ENCODE measurements at regions of chr16 and their contacts with region 1.

Region 1: GRCh38 chr16:30984669-30985400 is at the start of gene HSD3B7:
- DNase-seq: peak; percentile 73 to 88 (median 79)
- H3K4me3 ChIP-seq: peak within 1 kb of the TSS in 57 of 59 donors; percentile 8 to 65 (median 45)
- H3K27ac ChIP-seq: peak within 1 kb of the TSS in 23 of 59 donors; percentile 14 to 74 (median 48)
- H3K27me3 ChIP-seq: no peaks in the 10 kb centered on the region
- CTCF ChIP-seq: peak; percentile 67 to 99 (median 94)
- total RNA-seq, gene HSD3B7: 2.0 to 15.0 (median 4.4) TPM

Region 2: GRCh38 chr16:30609926-30610839 is 374.7 kb before region 1 on chr16 and contains the start of gene ZNF689:
- intact Hi-C with region 1: no loop called
- DNase-seq: peak; percentile 93 to 98 (median 96)
- H3K4me3 ChIP-seq: peak within 1 kb of the TSS; percentile 65 to 100 (median 93)
- H3K27ac ChIP-seq: peak within 1 kb of the TSS; percentile 27 to 99 (median 96)
- H3K27me3 ChIP-seq: no peaks in the 10 kb centered on the region
- CTCF ChIP-seq: peak in 25 of 56 donors; percentile 4 to 49 (median 27)
- total RNA-seq, gene ZNF689: 5.9 to 15.6 (median 8.8) TPM

Region 3: GRCh38 chr16:30934827-30935557 is 49.8 kb before region 1 on chr16:
- intact Hi-C with region 1: no loop called
- DNase-seq: peak in 6 of 10 donors; percentile 17 to 77 (median 56)
- H3K4me3 ChIP-seq: no peak overlapping the region
- H3K27ac ChIP-seq: peak overlapping the region in 14 of 59 donors; percentile 9 to 62 (median 28)
- H3K27me3 ChIP-seq: no peaks in the 10 kb centered on the region
- CTCF ChIP-seq: peak in 52 of 56 donors; percentile 11 to 71 (median 51)

Region 4: GRCh38 chr16:31032736-31033708 is 48.2 kb after region 1 on chr16 and contains the start of gene STX4:
- intact Hi-C with region 1: loop called in 1 of 2 experiments (anchors 5 kb)
- DNase-seq: peak; percentile 96 to 99 (median 98)
- H3K4me3 ChIP-seq: peak within 1 kb of the TSS; percentile 55 to 100 (median 96)
- H3K27ac ChIP-seq: peak within 1 kb of the TSS; percentile 85 to 100 (median 99)
- H3K27me3 ChIP-seq: no peaks in the 10 kb centered on the region
- CTCF ChIP-seq: peak in 20 of 56 donors; percentile 8 to 47 (median 20)
- total RNA-seq, gene STX4: 37.7 to 113 (median 67.3) TPM

Region 5: DNA sequence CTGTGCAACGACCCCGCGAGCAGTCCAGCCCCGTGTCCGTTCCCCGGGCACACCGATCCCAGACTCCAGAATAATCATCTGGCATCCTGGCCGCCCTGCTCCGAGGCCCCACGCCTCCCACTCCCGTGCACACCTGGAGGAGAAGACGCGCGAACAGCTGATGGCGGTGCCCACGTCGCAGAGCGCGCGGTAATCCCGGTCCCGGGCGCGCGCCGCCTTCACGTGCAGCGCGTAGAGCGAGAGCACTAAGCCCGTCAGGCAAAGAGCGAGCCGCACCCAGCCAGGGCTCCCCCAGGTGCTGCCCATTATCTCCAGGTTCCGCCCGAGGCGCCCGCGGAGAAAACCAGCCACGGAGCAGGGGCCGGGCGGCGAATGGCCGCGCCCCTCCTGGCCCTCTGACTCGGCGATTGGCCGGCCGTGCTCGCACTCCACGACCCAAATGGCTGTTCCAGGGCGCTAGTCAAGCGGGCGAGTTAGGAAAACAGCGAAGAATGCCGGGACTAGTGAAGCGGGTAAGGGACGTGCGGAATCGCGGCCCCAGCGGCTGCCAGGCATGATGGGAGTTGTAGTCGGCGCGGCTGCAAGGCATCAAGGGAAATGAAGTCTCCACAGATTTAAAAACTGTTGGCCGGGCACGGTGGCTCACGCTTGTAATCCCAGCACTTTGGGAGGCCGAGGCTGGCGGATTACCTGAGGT is 109.7 kb after region 1 on chr16 and contains the start of gene VKORC1:
- intact Hi-C with region 1: loop called in 1 of 2 experiments (anchors 2 kb)
- DNase-seq: peak; percentile 88 to 97 (median 94)
- H3K4me3 ChIP-seq: peak within 1 kb of the TSS; percentile 61 to 99 (median 90)
- H3K27ac ChIP-seq: peak within 1 kb of the TSS; percentile 45 to 96 (median 87)
- H3K27me3 ChIP-seq: no peaks in the 10 kb centered on the region
- CTCF ChIP-seq: peak in 37 of 56 donors; percentile 11 to 59 (median 33)
- total RNA-seq, gene VKORC1: 23.4 to 53.8 (median 37.0) TPM

Region 6: GRCh38 chr16:31142109-31143010 is 157.5 kb after region 1 on chr16:
- intact Hi-C with region 1: loop called in 1 of 2 experiments (anchors 5 kb)
- DNase-seq: peak; percentile 89 to 98 (median 95)
- H3K4me3 ChIP-seq: peak overlapping the region; percentile 25 to 78 (median 64)
- H3K27ac ChIP-seq: peak overlapping the region in 58 of 59 donors; percentile 30 to 93 (median 82)
- H3K27me3 ChIP-seq: peaks cover 0 to 7% (median 0%) of the 10 kb centered on the region in 45 donors
- CTCF ChIP-seq: peak; percentile 71 to 98 (median 89)

Region 7: GRCh38 chr16:31440516-31441184 is 455.8 kb after region 1 on chr16:
- intact Hi-C with region 1: loop called in 1 of 2 experiments (anchors 2 kb)
- DNase-seq: peak in 2 of 10 donors; percentile 6 to 11
- H3K4me3 ChIP-seq: no peak overlapping the region
- H3K27ac ChIP-seq: peak overlapping the region in 40 of 59 donors; percentile 2 to 73 (median 46)
- H3K27me3 ChIP-seq: no peaks in the 10 kb centered on the region
- CTCF ChIP-seq: no peak

Region 8: GRCh38 chr16:31451681-31452351 is 467.0 kb after region 1 on chr16:
- intact Hi-C with region 1: loop called in 1 of 2 experiments (anchors 5 kb)
- DNase-seq: peak in 8 of 10 donors; percentile 58 to 71 (median 66)
- H3K4me3 ChIP-seq: peak overlapping the region in 12 of 59 donors; percentile 4 to 36 (median 21)
- H3K27ac ChIP-seq: peak overlapping the region in 33 of 59 donors; percentile 1 to 78 (median 45)
- H3K27me3 ChIP-seq: no peaks in the 10 kb centered on the region
- CTCF ChIP-seq: peak in 49 of 56 donors; percentile 17 to 63 (median 42)

Region 9: DNA sequence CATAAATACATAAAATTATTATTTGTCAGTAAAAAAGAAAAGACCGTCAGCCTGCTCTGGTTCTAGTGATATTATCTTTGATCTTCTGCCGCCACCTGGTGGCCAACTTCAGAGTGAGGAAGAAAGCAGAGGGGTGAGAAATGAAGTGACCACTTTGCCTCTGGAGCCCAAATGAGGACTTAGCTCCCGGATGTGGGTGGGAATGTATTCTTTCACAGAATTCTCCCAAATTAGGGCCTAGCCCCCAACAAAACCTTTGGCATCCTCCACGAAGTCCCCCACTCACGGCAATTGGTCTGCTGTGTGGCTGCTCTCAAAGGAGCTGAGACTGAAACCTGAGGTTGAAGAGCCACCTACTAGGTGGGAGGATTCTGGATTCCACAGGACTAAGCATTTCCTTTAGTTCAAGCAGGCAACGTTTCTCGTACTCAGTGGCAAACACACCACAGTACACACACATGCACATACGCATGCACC is 883.9 kb after region 1 on chr16:
- intact Hi-C with region 1: loop called in 1 of 2 experiments (anchors 10 kb)
- DNase-seq: peak; percentile 60 to 89 (median 79)
- H3K4me3 ChIP-seq: peak overlapping the region in 27 of 59 donors; percentile 1 to 35 (median 18)
- H3K27ac ChIP-seq: peak overlapping the region in 18 of 59 donors; percentile 1 to 71 (median 46)
- H3K27me3 ChIP-seq: no peaks in the 10 kb centered on the region
- CTCF ChIP-seq: peak; percentile 79 to 97 (median 91)